HEK293 (cell line): ENCODE measurements at regions of chr2 and their contacts with region 1.

Region 1: GRCh38 chr2:209977386-209978239 is 24.8 kb upstream of the RPE start:
- H3K4me3 ChIP-seq: no peak overlapping the region
- H3K27ac ChIP-seq: no peak overlapping the region
- H3K4me1 ChIP-seq: peaks cover 5% of the 10 kb centered on the region; the same call in 1 of the 2 replicates
- CTCF ChIP-seq: 0 out of 2 replicates have a peak, but pooled peaks have one; percentile 13

Region 2: DNA sequence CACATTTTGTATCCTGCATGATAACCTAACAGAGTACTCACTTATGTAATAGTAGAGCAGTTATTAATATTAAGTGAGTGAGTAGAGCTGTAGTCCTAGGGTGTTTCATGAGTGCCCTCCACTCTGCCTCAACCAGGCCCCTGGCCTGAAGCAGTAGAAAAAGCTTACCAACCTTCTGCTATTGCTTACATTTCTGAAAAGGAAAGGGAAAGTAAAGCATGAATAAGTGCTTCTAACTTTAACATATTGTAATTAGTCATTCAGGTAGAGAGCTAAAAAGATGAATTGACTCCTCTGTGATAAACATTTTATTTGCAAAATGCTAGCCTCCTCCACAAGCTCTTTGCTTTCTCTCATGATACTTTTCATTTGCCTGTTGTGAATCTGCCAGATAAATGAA is 69.9 kb before region 1 on chr2:
- CTCF ChIA-PET with region 1: no interaction called
- POLR2A ChIA-PET with region 1: no interaction called
- H3K4me3 ChIP-seq: no peak overlapping the region
- H3K27ac ChIP-seq: no peak overlapping the region
- H3K4me1 ChIP-seq: no peaks in the 10 kb centered on the region
- CTCF ChIP-seq: no peak

Region 3: GRCh38 chr2:209988010-209988409 is 10.4 kb after region 1 on chr2:
- CTCF ChIA-PET with region 1: interaction called, 10 read pairs
- POLR2A ChIA-PET with region 1: no interaction called
- H3K4me3 ChIP-seq: no peak overlapping the region
- H3K27ac ChIP-seq: no peak overlapping the region
- H3K4me1 ChIP-seq: no peaks in the 10 kb centered on the region
- CTCF ChIP-seq: no peak

Region 4: DNA sequence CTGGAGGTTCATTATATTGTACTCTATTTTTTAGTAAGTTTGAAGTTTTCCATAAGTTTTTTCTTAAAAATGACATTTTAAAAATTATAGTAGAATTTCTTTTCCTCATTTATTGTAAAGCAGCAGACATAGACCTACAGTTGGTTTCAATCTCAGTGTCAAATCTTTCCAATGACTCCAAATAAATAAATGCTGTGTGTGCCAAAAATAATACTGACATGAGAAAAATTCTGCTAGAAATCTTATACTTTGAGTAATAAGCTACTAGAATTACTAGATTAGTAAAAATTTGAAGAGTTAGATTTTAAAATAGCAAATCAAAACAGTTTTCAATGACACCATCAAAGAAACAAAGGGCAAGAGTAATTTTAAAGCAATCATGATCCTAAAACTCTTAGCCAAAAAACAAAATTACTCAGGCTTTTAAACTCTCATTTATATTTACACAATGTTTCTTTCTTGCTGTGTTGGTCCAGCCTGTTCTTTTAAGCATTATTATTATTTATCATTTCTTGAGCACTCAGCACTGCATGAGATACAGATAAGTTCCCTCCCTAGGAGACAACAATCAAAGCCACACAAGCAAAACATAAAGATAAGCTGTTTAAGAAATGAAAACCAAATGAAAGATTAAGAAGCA is 201.9 kb after region 1 on chr2:
- CTCF ChIA-PET with region 1: no interaction called
- POLR2A ChIA-PET with region 1: no interaction called
- H3K4me3 ChIP-seq: no peak overlapping the region
- H3K27ac ChIP-seq: no peak overlapping the region
- H3K4me1 ChIP-seq: peaks cover 12% of the 10 kb centered on the region; the same call in 1 of the 2 replicates
- CTCF ChIP-seq: no peak

Region 5: DNA sequence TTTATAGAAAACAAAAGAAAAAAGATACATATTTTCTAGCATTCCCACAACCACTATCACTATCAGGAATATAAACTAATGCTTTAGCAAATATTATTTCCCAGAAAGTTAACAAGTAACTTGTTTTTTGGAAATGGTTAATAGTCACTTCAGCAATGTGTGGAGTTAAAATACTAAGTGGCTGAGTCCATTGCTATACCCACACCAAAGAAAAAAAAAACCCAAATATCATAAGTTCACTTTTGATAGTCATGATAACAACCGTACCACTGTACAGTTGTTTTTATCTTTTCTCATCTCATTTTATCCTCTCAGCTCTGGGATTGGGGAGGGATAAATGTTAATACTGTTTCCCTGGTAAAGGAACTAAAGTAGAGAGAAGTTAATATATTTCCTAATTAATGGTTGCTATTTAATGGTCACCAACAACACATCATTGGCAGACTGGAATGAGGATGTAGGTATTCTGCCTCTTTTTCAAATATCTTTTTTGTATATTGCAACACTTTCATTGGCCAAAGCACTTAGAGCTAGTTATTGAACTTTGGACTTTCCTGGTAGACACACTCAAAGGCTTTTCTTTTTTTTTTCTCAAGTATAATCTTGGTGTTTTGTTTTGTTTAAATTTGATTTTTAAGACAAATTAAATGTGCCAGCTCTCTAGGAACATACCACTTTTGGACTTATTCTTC is 212.0 kb after region 1 on chr2:
- CTCF ChIA-PET with region 1: interaction called, 44 read pairs
- POLR2A ChIA-PET with region 1: no interaction called
- H3K4me3 ChIP-seq: no peak overlapping the region
- H3K27ac ChIP-seq: no peak overlapping the region
- H3K4me1 ChIP-seq: peaks cover 6% of the 10 kb centered on the region
- CTCF ChIP-seq: no peak

Region 6: DNA sequence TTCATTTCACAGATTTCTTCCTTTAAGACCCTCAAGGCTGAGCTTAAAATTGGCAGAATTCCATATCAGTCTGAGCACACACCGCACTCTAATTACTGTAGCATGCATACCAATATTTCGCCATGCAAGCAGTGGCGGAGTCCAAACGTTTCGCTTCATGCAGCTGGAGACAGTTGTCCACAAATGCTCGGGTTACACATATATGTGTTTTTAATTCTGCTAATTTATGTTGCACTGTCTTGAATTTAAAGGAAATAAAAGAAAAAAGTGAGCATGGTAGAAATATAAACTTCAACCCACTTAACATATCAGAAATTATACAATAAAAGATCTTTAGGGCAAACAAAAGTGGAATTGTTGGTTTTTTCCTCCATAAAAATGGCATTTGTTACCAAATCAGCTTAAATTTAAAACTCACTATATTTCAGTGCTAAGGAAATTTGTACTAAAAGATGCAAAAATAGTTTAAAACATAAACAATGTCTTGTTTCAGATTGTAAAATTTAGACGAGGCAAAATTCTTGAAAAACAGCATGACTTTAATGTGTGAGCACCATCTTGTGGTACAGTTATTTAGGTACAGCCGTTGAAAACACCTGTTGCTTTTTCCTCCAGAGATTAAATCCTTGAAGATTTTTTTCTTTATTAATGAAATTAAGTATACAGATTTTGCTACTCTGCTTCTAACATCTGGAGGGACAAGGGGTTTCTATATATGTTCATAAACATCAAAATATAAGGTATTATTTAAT is 217.7 kb after region 1 on chr2:
- CTCF ChIA-PET with region 1: interaction called, 44 read pairs
- POLR2A ChIA-PET with region 1: no interaction called
- H3K4me3 ChIP-seq: no peak overlapping the region
- H3K27ac ChIP-seq: no peak overlapping the region
- H3K4me1 ChIP-seq: no peaks in the 10 kb centered on the region
- CTCF ChIP-seq: no peak